Heart right ventricle (tissue), 16 donors: ENCODE measurements at regions of chr11 and their contacts with region 1.

Region 1: DNA sequence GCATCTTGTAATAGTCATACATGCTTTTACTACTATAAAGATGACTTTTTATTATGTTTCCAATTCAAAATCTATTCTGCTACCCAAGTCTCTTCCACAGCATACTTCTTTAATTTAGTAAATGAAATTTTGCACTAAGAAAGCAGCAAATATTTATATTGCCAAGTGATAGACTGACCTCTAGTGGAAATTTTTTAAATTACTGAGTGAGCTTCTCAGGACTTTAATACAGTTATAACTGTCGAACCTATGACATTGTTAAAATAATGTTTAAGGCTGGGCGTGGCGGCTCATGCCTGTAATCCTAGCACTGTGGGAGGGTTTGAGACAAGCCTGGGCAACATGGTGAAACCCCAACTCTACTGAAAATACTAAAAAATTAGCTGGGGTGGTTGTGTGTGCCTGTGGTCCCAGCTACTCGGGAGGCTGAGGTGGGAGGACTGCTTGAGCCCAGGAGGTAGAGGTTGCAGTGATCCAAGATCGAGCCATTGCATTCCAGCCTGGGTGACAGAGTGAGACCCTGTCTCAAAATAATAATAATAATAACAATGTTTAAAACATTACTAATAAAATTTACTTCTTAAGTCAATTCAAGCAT is 27.3 kb downstream of the STK33 start:
- DNase-seq: no peak
- ATAC-seq: peak in 4 of 8 donors; percentile 8 to 44 (median 33)
- H3K4me3 ChIP-seq: no peak overlapping the region
- H3K27ac ChIP-seq: no peak overlapping the region
- H3K4me1 ChIP-seq: no peaks in the 10 kb centered on the region
- H3K27me3 ChIP-seq: peaks cover 0 to 7% (median 0%) of the 10 kb centered on the region in 7 donors
- CTCF ChIP-seq: peak; percentile 51 to 86 (median 70)

Region 2: DNA sequence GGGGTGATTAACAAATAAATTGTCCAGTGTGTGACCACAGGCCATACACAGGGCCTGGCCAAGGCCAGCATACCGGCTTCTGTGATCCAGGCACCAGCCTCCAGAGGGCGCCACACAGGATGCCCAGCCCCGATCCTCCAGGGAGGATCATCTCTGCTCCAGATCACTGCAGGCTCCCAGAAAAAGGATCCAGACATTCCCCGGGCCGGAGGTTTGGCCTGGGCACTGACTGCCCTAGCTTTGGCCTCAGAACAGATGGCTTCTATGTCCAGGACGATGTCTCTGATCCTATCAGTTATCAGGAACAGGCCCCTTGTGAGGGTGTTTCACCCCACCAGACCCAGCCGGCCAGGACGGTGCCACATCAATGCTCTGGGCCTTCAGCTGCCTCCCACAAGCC is 228.6 kb before region 1 on chr11:
- intact Hi-C with region 1: loop called in 8 of 10 experiments (anchors 5 to 10 kb)
- DNase-seq: peak; percentile 21 to 47
- ATAC-seq: peak in 5 of 8 donors; percentile 60 to 80 (median 74)
- H3K4me3 ChIP-seq: no peak overlapping the region
- H3K27ac ChIP-seq: no peak overlapping the region
- H3K4me1 ChIP-seq: no peaks in the 10 kb centered on the region
- H3K27me3 ChIP-seq: peaks cover 0 to 2% (median 0%) of the 10 kb centered on the region in 7 donors
- CTCF ChIP-seq: peak; percentile 33 to 81 (median 65)